ENCODE measurements at regions of chr3 and their contacts with region 1.

Region 1: DNA sequence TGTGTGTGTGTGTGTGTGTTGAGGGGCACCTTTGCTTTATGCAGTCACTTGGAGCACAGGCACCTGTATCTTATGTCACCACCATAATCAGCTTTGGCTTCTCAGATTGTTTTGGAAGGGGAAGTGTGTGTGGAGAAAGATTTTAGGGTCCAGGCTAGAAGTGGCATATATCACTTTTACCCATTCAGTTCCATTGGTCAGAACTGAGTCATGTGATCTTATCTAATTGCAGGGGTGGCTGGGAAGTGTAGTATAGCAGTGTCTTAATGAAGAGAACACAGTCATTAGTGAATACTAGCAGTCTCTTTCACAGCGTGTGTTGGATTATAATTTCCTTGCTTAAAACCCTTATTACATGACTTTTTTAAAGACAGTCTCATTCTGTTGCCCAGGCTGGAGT is 20.6 kb downstream of the NCK1 start:
- DNase-seq: peak in 1 of 2 donors; percentile 47
- ATAC-seq: peak in 2 of 3 donors; percentile 67 to 68
- H3K4me3 ChIP-seq: no peak overlapping the region
- H3K4me3 Mint-ChIP-seq: no peak overlapping the region
- H3K27ac ChIP-seq: no peak overlapping the region
- H3K27ac Mint-ChIP-seq: peak overlapping the region; percentile 75 to 88
- H3K4me1 ChIP-seq: peaks cover 18% of the 10 kb centered on the region
- H3K4me1 Mint-ChIP-seq: peaks cover 77% of the 10 kb centered on the region in 2 donors
- H3K27me3 ChIP-seq: no peaks in the 10 kb centered on the region
- H3K27me3 Mint-ChIP-seq: no peaks in the 10 kb centered on the region
- CTCF ChIP-seq: no peak

Region 2: GRCh38 chr3:136919799-136920580 is 37.4 kb after region 1 on chr3:
- intact Hi-C with region 1: loop called (anchors 5 kb)
- DNase-seq: peak in 1 of 2 donors; percentile 84
- ATAC-seq: peak; percentile 80 to 91 (median 90)
- H3K4me3 ChIP-seq: no peak overlapping the region
- H3K4me3 Mint-ChIP-seq: peak overlapping the region; percentile 78
- H3K27ac ChIP-seq: peak overlapping the region; percentile 90
- H3K27ac Mint-ChIP-seq: peak overlapping the region; percentile 97 to 98
- H3K4me1 ChIP-seq: peaks cover 15% of the 10 kb centered on the region
- H3K4me1 Mint-ChIP-seq: peaks cover 85 to 89% of the 10 kb centered on the region in 2 donors
- H3K27me3 ChIP-seq: no peaks in the 10 kb centered on the region
- H3K27me3 Mint-ChIP-seq: no peaks in the 10 kb centered on the region
- CTCF ChIP-seq: no peak

Region 3: DNA sequence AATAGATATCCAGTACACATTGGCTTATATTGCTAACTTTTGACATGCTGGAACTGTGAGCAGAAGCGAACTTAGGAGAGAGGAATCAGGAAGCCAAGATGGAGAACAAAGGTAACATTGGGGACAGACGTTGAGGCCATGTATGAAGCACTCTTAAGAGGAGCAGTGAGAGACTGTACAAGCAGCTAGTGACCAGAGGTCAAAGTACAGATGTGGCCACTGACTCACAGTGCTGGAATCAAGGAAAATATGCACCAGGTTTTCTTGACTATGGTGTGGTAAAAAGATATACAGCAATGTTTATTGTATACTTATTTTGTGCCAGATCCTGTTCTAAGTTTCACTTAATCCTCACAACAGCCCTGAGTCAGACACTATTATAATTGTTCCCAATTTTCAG is 73.2 kb after region 1 on chr3:
- intact Hi-C with region 1: loop called (anchors 5 kb)
- DNase-seq: no peak
- ATAC-seq: no peak
- H3K4me3 ChIP-seq: no peak overlapping the region
- H3K4me3 Mint-ChIP-seq: no peak overlapping the region
- H3K27ac ChIP-seq: no peak overlapping the region
- H3K27ac Mint-ChIP-seq: peak overlapping the region; percentile 60 to 73
- H3K4me1 ChIP-seq: peaks cover 4% of the 10 kb centered on the region
- H3K4me1 Mint-ChIP-seq: peaks cover 34 to 39% of the 10 kb centered on the region in 2 donors
- H3K27me3 ChIP-seq: no peaks in the 10 kb centered on the region
- H3K27me3 Mint-ChIP-seq: no peaks in the 10 kb centered on the region
- CTCF ChIP-seq: no peak